Activated CD4-positive, alpha-beta memory T cell treated with anti-CD3 and anti-CD28 coated beads, Interleukin-2, amount 10 ng/mL, durations not matched to agents 7 days and 5 days (primary cell): ENCODE measurements at regions of chr9 and their contacts with region 1.

Region 1: GRCh38 chr9:22452415-22453010 is 5.9 kb downstream of the DMRTA1 start:
- DNase-seq: peak; percentile 47
- H3K4me3 Mint-ChIP-seq: no peak overlapping the region
- H3K27ac Mint-ChIP-seq: no peak overlapping the region
- H3K4me1 Mint-ChIP-seq: peaks cover 3% of the 10 kb centered on the region
- H3K27me3 Mint-ChIP-seq: peaks cover 44% of the 10 kb centered on the region

Region 2: DNA sequence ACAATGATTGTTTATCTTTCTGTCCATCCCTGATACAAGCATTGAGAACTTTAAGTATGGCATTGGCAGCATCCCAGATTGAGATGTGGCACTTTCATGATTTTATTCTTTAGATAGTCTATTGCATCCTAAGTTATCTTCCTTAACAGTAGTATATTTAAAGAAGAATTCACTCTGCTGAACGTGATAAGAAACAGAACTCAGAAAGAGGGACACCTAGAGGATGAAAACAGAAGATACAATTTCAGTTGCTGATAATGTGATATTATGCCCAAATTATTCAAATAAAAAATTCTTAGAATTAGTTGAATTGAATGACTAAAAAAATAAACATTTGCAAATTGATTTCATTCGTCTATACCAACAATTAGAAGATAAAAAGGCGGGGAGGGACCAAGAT is 224.0 kb before region 1 on chr9:
- CTCF ChIA-PET with region 1: no interaction called
- POLR2A ChIA-PET with region 1: no interaction called
- DNase-seq: no peak
- H3K4me3 Mint-ChIP-seq: no peak overlapping the region
- H3K27ac Mint-ChIP-seq: no peak overlapping the region
- H3K4me1 Mint-ChIP-seq: no peaks in the 10 kb centered on the region
- H3K27me3 Mint-ChIP-seq: peaks cover 40% of the 10 kb centered on the region

Region 3: DNA sequence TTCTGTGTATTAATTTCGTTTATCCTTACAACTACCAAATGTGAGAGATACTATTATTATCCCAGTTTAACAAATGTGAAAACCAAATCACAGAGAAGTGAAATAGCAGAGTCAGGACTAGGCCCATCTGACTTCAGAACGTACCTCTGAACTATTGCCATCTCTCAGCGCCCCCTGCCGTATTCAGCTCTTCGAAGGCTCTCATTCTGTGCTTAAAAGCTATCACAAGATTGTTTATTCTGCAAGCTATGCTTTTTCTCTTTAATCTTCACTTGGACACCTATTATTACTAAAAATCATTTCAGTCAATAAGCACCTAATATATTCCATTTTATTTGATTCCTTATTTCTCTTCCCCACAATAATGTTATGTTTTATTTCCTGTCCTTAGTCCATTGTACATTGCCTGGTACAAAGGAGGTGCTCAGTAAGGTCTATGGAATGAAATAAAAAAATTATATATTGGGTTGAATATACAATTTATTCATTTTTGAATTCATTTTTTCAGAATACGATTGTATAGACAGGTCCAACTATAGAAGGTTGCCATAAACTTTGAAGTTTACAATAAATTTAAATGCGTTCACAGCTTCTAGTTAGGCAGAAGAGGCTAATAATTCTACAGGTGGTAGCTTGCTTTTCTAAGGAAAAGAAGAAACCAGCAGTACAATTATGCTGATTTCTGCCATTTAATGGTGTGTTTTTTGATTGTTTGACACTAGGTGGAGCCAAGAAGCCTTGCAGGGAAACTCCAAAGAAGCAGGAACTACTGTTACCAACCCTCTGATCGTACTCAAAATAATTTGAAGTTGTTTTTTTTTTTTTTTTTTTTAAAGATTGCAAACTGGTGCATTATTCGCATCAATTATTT is 208.1 kb before region 1 on chr9:
- CTCF ChIA-PET with region 1: interaction called, 22 read pairs
- POLR2A ChIA-PET with region 1: no interaction called
- DNase-seq: peak; percentile 42
- H3K4me3 Mint-ChIP-seq: no peak overlapping the region
- H3K27ac Mint-ChIP-seq: no peak overlapping the region
- H3K4me1 Mint-ChIP-seq: peaks cover 19% of the 10 kb centered on the region
- H3K27me3 Mint-ChIP-seq: peaks cover 44% of the 10 kb centered on the region

Region 4: GRCh38 chr9:22395585-22396205 is 56.8 kb before region 1 on chr9:
- CTCF ChIA-PET with region 1: no interaction called
- POLR2A ChIA-PET with region 1: no interaction called
- DNase-seq: no peak
- H3K4me3 Mint-ChIP-seq: no peak overlapping the region
- H3K27ac Mint-ChIP-seq: no peak overlapping the region
- H3K4me1 Mint-ChIP-seq: no peaks in the 10 kb centered on the region
- H3K27me3 Mint-ChIP-seq: no peaks in the 10 kb centered on the region

Region 5: DNA sequence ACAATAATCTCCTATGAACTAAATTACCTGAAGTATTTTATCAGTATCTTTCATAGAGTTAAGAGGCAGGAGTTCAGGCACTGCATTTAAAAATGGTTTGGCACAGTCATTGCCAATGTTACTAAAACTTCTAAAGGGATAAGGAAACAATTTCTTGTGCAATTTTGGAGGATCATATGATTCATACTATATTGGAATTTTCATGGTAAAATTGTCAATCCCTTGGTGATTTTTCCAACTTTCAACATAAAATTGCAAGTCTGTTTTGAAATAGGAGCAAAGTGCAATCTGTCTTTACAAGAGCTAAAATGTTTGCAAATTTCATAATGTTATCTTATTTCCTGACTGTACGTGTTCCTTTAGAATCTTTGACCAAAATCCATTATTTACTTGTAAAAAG is 205.2 kb after region 1 on chr9:
- CTCF ChIA-PET with region 1: no interaction called
- POLR2A ChIA-PET with region 1: no interaction called
- DNase-seq: no peak
- H3K4me3 Mint-ChIP-seq: no peak overlapping the region
- H3K27ac Mint-ChIP-seq: no peak overlapping the region
- H3K4me1 Mint-ChIP-seq: no peaks in the 10 kb centered on the region
- H3K27me3 Mint-ChIP-seq: no peaks in the 10 kb centered on the region